ENCODE measurements at regions of chr3 and their contacts with region 1.

Region 1: DNA sequence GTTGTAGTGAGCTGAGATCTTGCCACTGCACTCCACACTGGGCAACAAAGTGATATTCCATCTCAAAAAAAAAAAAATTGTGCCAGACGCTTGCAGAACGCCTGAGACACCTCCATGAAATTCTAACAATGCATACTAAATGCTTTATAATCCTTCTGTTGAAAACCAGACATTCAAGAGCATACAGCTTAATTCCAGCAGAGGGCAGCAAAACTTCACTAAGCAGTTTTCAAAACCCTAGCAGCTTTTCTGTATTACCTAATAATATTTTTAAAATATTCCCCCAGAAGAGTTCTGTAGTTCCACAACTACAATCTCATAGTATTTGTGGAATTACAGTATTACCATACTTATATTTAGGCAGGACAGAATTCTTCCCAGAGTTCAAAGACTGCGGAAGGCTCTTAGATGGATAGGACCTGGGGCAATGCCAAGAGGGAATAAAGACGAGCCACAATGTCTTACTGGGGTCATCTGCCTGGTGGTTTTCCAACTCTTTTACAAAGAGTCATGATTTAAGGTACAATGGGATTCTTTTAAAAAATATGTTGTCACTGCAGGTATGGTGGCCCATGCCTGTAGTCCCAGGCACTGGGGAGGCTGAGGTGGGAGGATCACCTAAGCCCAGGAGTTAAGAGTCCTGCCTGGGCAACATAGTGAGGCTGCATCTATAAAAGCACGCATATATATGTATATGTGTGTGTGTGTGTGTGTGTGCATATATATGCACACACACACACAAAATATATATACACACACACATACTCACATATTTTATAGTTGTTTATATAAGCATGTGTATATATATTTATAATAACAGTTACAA is 19.6 kb upstream of the TASOR start:
- DNase-seq: peak; percentile 72
- H3K4me3 ChIP-seq: no peak overlapping the region
- H3K27ac ChIP-seq: no peak overlapping the region
- H3K27me3 ChIP-seq: no peaks in the 10 kb centered on the region
- CTCF ChIP-seq: peak; percentile 74

Region 2: DNA sequence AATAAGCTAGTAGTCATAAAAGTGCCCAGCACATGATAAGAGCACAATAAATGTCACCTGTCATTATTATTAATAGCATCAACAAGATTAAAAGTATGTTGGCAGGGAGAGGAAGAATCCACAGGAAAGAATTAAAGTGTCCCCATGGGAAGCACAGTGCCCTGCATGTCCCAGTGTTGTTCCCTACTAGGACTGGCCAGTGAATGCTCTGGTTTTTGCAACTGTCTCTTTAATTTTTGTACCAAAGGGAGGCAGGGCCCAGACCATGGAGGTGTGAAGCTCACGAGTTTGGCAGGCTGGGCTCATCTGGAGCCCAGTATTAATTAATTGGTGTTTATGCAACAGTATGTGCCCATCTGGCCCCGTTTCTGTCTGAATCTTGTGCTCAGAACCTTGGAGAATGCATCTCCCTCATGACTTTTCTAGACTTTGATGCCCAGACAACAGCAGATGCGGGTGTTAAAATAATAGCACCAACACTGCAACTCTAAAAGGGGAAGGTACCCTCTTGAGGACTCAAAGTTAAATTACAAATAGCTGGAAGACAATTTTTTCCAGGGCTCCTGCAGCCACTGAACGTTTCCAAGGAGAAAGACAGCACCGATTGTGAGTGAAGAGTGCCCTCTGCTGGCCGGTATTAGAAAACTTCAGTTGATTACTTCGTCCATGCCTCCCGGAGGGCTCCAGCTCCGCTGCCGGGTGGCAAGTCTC is 285.9 kb after region 1 on chr3:
- in situ Hi-C with region 1: loop called (anchors 25 kb)
- DNase-seq: peak; percentile 58
- H3K4me3 ChIP-seq: no peak overlapping the region
- H3K27ac ChIP-seq: no peak overlapping the region
- H3K27me3 ChIP-seq: no peaks in the 10 kb centered on the region
- CTCF ChIP-seq: peak; percentile 72